Activated CD4-positive, alpha-beta T cell treated with anti-CD3 and anti-CD28 coated beads, Interleukin-2, amount 10 ng/mL, durations not matched to agents 24 days and 14 days (primary cell): ENCODE measurements at regions of chr14 and their contacts with region 1.

Region 1: DNA sequence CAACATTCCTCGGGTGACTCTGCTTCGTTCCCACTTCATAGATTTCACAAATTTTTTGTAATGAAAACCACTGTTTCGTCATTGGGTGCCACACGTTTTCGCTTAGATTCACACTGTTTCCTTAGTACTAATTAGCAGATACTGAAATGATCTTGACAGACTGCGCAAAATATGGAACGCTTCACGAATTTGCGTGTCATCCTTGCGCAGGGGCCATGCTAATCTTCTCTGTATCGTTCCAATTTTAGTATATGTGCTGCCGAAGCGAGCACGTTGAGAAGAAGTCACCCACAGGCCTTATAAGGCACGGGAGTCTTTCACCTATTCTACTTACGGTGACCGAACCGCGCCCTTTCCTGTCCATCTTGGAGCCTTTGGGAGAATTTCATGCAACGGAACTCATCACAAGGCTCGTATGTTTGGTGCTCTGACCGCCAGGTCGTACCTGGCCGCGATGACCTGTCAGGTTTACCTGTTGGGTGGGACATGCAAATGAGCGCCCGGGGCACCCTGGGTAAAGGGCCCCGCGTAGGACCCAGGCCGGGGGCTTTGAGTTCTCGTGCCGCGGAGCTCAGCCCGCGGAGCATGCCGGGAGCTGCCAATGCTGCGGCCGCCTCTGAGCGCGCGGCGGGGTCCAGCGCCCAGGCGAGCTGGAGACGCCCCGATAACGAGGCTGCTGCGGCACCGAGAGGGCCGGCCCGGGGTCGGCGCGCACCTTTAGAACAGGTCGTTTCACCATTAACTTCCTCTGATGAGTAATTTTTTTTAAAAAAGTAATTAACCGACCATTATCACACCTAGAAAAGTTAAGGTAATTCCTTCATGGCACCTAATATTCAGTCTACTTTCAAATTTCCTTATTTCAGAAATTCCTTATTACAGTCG is at the start of gene RNU6-8:
- DNase-seq: peak; percentile 95
- H3K4me3 Mint-ChIP-seq: peak within 1 kb of the TSS; percentile 87
- H3K27ac Mint-ChIP-seq: peak within 1 kb of the TSS; percentile 94
- H3K4me1 Mint-ChIP-seq: peaks cover 36% of the 10 kb centered on the region
- H3K27me3 Mint-ChIP-seq: peaks cover 24% of the 10 kb centered on the region
- total RNA-seq, gene RNU6-8: not detected in 2 replicates

Region 2: GRCh38 chr14:30621940-30622830 is 1581.1 kb before region 1 on chr14 and contains the start of gene SCFD1:
- intact Hi-C with region 1: loop called (anchors 5 kb)
- DNase-seq: peak; percentile 99
- H3K4me3 Mint-ChIP-seq: peak within 1 kb of the TSS; percentile 87
- H3K27ac Mint-ChIP-seq: peak within 1 kb of the TSS; percentile 95
- H3K4me1 Mint-ChIP-seq: peaks cover 32% of the 10 kb centered on the region
- H3K27me3 Mint-ChIP-seq: no peaks in the 10 kb centered on the region
- total RNA-seq, gene SCFD1: 75.3 and 81.0 TPM in 2 replicates

Region 3: DNA sequence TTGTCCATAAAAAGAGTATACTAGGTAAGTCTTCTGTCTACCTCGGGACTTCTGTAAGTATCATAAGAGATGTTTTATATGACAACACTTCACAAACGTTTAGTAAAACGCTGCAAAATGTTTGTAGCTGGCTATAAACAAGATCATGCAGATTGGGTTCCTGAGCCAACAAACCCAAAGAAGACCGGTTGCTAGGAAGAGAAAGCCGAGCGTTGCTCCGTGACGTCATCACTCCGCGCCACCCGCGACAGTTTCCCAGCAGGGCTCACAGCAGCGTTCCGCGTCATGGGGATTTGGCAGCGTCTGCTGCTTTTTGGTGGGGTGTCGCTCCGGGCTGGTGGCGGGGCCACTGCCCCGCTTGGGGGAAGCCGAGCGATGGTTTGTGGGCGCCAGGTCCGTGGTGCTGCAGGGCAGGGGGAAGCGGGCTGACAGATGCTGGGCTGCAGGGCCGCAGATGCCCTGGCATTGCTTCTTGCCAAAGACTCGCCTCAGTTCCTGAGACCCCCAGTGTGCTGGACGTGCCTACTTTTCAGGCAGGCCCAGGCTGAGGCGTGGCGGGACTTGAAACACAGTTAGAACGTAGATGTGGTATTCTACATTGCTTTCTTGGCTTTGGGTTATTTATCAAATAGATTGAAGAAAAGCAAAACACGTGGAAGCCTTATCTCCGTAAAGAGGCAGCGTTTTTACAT is 641.9 kb before region 1 on chr14 and contains the start of gene NUBPL:
- intact Hi-C with region 1: loop called (anchors 5 kb)
- DNase-seq: peak; percentile 99
- H3K4me3 Mint-ChIP-seq: peak within 1 kb of the TSS; percentile 95
- H3K27ac Mint-ChIP-seq: peak within 1 kb of the TSS; percentile 97
- H3K4me1 Mint-ChIP-seq: peaks cover 16% of the 10 kb centered on the region
- H3K27me3 Mint-ChIP-seq: peaks cover 12% of the 10 kb centered on the region
- total RNA-seq, gene NUBPL: 12.1 and 12.3 TPM in 2 replicates

Region 4: DNA sequence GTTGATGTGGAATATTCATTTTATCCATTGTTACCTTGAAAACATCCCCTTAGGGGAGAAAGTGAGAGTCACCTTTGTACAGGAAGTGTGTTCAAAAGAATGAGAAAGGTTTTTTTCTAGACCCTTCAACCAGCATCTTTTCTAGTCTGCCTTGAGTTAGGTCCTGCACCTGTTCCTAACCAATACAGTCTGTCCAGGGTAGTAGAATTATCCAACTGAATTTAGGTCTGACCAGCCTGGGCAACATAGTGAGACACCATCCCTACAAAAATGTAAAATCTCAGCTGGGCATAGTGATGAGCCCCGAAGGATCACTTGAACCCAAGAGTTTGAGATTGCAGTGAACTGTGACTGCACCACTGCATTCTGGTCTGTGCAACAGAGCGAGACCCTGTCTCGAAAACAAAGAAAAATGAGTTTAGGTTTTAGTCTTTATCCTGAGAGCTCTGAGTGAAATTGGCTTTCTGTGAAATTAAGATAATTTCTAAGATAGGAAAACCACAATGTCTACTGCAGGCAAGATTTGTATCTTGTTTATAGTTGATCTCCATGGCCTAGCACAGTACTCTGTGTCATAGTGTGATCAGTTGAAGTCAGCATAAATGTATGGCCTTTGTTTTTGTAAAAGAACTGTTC is 101.0 kb before region 1 on chr14:
- intact Hi-C with region 1: loop called (anchors 1 kb)
- DNase-seq: peak; percentile 70
- H3K4me3 Mint-ChIP-seq: peak overlapping the region; percentile 42
- H3K27ac Mint-ChIP-seq: peak overlapping the region; percentile 73
- H3K4me1 Mint-ChIP-seq: peaks cover 20% of the 10 kb centered on the region
- H3K27me3 Mint-ChIP-seq: no peaks in the 10 kb centered on the region

Region 5: GRCh38 chr14:32939254-32940065 is 736.2 kb after region 1 on chr14:
- intact Hi-C with region 1: loop called (anchors 5 kb)
- DNase-seq: peak; percentile 69
- H3K4me3 Mint-ChIP-seq: peak overlapping the region; percentile 83
- H3K27ac Mint-ChIP-seq: peak overlapping the region; percentile 66
- H3K4me1 Mint-ChIP-seq: peaks cover 10% of the 10 kb centered on the region
- H3K27me3 Mint-ChIP-seq: peaks cover 62% of the 10 kb centered on the region